Natural killer cell (primary cell): ENCODE measurements at regions of chr17 and their contacts with region 1.

Region 1: DNA sequence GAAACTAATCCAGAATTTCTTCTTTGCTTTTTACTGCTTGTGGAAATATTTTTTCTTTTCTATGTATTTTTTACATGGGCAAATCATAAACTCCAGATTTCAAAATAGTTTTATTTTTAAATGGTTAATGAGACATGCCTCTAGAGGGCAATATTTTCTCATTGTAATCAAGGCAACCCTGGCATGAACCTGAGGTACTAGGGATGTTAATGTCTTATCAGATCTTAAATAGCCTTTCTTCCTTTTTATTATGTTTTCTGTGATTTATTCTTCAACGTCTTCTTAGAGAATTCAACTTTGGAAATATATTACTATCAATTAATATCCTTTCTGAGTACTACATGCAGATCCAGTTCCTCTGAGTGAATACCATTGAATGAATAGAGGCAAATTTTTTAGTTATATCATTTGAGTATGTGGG is 324.7 kb downstream of the BCAS3 start:
- DNase-seq: peak in 1 of 2 donors; percentile 51
- ATAC-seq: peak in 1 of 3 donors; percentile 39
- H3K4me3 ChIP-seq: no peak overlapping the region
- H3K4me3 Mint-ChIP-seq: no peak overlapping the region
- H3K27ac ChIP-seq: no peak overlapping the region
- H3K27ac Mint-ChIP-seq: no peak overlapping the region
- H3K4me1 ChIP-seq: no peaks in the 10 kb centered on the region
- H3K4me1 Mint-ChIP-seq: no peaks in the 10 kb centered on the region
- H3K27me3 ChIP-seq: no peaks in the 10 kb centered on the region
- H3K27me3 Mint-ChIP-seq: no peaks in the 10 kb centered on the region
- CTCF ChIP-seq: peak; percentile 69

Region 2: DNA sequence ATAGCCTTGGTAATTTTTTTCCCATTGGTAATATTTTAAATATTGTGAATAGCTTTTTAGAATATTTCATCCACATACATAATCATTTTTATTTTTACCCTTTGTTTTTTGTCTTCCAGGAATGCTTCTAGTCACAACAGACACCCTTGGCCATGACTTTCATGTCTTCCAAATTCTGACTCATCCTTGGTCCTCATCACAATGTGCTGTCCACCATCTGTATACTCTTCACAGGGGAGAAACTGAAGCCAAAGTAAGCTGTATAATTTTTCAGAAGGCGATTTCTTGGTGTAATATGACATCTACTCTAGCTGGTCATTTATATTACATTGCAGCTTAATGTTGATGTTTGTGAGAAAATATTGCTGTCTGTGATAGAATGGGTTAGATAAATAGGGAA is 55.2 kb before region 1 on chr17:
- intact Hi-C with region 1: no loop called
- DNase-seq: no peak
- ATAC-seq: no peak
- H3K4me3 ChIP-seq: no peak overlapping the region
- H3K4me3 Mint-ChIP-seq: no peak overlapping the region
- H3K27ac ChIP-seq: no peak overlapping the region
- H3K27ac Mint-ChIP-seq: no peak overlapping the region
- H3K4me1 ChIP-seq: no peaks in the 10 kb centered on the region
- H3K4me1 Mint-ChIP-seq: no peaks in the 10 kb centered on the region
- H3K27me3 ChIP-seq: no peaks in the 10 kb centered on the region
- H3K27me3 Mint-ChIP-seq: no peaks in the 10 kb centered on the region
- CTCF ChIP-seq: no peak

Region 3: DNA sequence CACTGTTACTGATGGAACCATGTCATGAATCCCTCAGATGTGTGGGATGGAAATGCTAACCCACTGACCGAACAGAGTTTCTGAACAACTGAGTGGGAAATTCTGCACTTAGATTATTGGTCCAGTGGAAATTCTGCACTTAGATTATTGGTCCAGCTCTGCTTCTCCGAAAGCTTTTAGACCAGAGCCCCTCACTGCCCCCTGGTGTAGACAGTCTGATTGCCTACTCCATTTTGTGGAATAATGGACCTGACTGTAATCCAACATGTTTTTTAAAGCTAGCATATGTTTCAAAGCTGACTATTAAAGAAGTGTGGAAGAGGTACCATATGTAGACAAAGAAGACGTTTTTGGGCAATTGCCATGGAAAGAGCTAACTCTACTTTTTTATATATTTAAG is 347.0 kb after region 1 on chr17:
- intact Hi-C with region 1: loop called (anchors 2 kb)
- DNase-seq: peak in 1 of 2 donors; percentile 10
- ATAC-seq: no peak
- H3K4me3 ChIP-seq: no peak overlapping the region
- H3K4me3 Mint-ChIP-seq: no peak overlapping the region
- H3K27ac ChIP-seq: no peak overlapping the region
- H3K27ac Mint-ChIP-seq: no peak overlapping the region
- H3K4me1 ChIP-seq: no peaks in the 10 kb centered on the region
- H3K4me1 Mint-ChIP-seq: no peaks in the 10 kb centered on the region
- H3K27me3 ChIP-seq: no peaks in the 10 kb centered on the region
- H3K27me3 Mint-ChIP-seq: no peaks in the 10 kb centered on the region
- CTCF ChIP-seq: no peak

Region 4: GRCh38 chr17:61361084-61361483 is 358.8 kb after region 1 on chr17:
- intact Hi-C with region 1: loop called (anchors 1 kb)
- DNase-seq: no peak
- ATAC-seq: no peak
- H3K4me3 ChIP-seq: no peak overlapping the region
- H3K4me3 Mint-ChIP-seq: no peak overlapping the region
- H3K27ac ChIP-seq: no peak overlapping the region
- H3K27ac Mint-ChIP-seq: no peak overlapping the region
- H3K4me1 ChIP-seq: no peaks in the 10 kb centered on the region
- H3K4me1 Mint-ChIP-seq: no peaks in the 10 kb centered on the region
- H3K27me3 ChIP-seq: no peaks in the 10 kb centered on the region
- H3K27me3 Mint-ChIP-seq: no peaks in the 10 kb centered on the region
- CTCF ChIP-seq: no peak